ENCODE measurements at regions of chr10 and their contacts with region 1.

Region 1: GRCh38 chr10:30284865-30285594 is 64.0 kb downstream of the MTPAP start:
- DNase-seq: no peak
- ATAC-seq: peak; percentile 64
- H3K4me3 ChIP-seq: no peak overlapping the region
- H3K4me3 Mint-ChIP-seq: no peak overlapping the region
- H3K27ac ChIP-seq: no peak overlapping the region
- H3K27ac Mint-ChIP-seq: no peak overlapping the region
- H3K4me1 ChIP-seq: no peaks in the 10 kb centered on the region
- H3K4me1 Mint-ChIP-seq: peaks cover 0 to 8% (median 4%) of the 10 kb centered on the region in 7 donors
- H3K27me3 ChIP-seq: no peaks in the 10 kb centered on the region
- H3K27me3 Mint-ChIP-seq: no peaks in the 10 kb centered on the region

Region 2: DNA sequence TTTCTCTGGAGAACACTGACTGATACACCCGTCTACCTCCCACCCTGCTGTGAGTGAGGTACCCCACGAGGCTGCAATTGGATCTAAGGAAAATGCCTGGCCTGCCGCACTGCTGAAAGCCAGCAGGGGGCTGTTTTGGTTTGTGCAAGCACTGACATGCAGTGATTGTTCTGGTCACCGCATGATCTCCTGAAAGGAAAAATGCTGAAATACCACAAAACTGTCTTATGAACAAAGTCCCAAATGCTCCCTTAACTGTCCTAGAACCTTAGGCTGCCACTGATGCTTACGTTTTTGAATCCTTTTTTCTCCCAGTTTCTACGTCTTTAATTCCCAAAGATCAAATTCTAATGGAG is 358.4 kb before region 1 on chr10:
- CTCF ChIA-PET with region 1: no interaction called
- POLR2A ChIA-PET with region 1: no interaction called
- intact Hi-C with region 1: no loop called
- DNase-seq: no peak
- ATAC-seq: no peak
- H3K4me3 ChIP-seq: no peak overlapping the region
- H3K4me3 Mint-ChIP-seq: no peak overlapping the region
- H3K27ac ChIP-seq: no peak overlapping the region
- H3K27ac Mint-ChIP-seq: no peak overlapping the region
- H3K4me1 ChIP-seq: no peaks in the 10 kb centered on the region
- H3K4me1 Mint-ChIP-seq: peaks cover 0 to 9% (median 0%) of the 10 kb centered on the region in 7 donors
- H3K27me3 ChIP-seq: no peaks in the 10 kb centered on the region
- H3K27me3 Mint-ChIP-seq: peaks cover 4 to 32% (median 6%) of the 10 kb centered on the region in 5 donors

Region 3: GRCh38 chr10:30324448-30325110 is 39.5 kb after region 1 on chr10:
- CTCF ChIA-PET with region 1: no interaction called
- POLR2A ChIA-PET with region 1: no interaction called
- intact Hi-C with region 1: loop called in 1 of 2 experiments (anchors 1 kb)
- DNase-seq: no peak
- ATAC-seq: no peak
- H3K4me3 ChIP-seq: no peak overlapping the region
- H3K4me3 Mint-ChIP-seq: no peak overlapping the region
- H3K27ac ChIP-seq: no peak overlapping the region
- H3K27ac Mint-ChIP-seq: peak overlapping the region in 1 of 9 donors; percentile 62
- H3K4me1 ChIP-seq: no peaks in the 10 kb centered on the region
- H3K4me1 Mint-ChIP-seq: peaks cover 2 to 20% (median 8%) of the 10 kb centered on the region in 7 donors
- H3K27me3 ChIP-seq: no peaks in the 10 kb centered on the region
- H3K27me3 Mint-ChIP-seq: no peaks in the 10 kb centered on the region

Region 4: GRCh38 chr10:30701451-30702173 is 416.6 kb after region 1 on chr10:
- CTCF ChIA-PET with region 1: no interaction called
- POLR2A ChIA-PET with region 1: no interaction called
- intact Hi-C with region 1: no loop called
- DNase-seq: peak in 8 of 9 donors; percentile 68 to 81 (median 74)
- ATAC-seq: peak; percentile 80
- H3K4me3 ChIP-seq: peak overlapping the region; percentile 31
- H3K4me3 Mint-ChIP-seq: peak overlapping the region; percentile 68 to 98 (median 88)
- H3K27ac ChIP-seq: peak overlapping the region; percentile 86
- H3K27ac Mint-ChIP-seq: peak overlapping the region; percentile 88 to 98 (median 96)
- H3K4me1 ChIP-seq: peaks cover 63 to 74% of the 10 kb centered on the region in 2 donors
- H3K4me1 Mint-ChIP-seq: peaks cover 51 to 97% (median 88%) of the 10 kb centered on the region in 7 donors
- H3K27me3 ChIP-seq: no peaks in the 10 kb centered on the region
- H3K27me3 Mint-ChIP-seq: no peaks in the 10 kb centered on the region

Measured in naive thymus-derived CD4-positive, alpha-beta T cell (primary cell).